ENCODE measurements at regions of chr19 and their contacts with region 1.

Region 1: GRCh38 chr19:46451352-46451751 is 20.0 kb downstream of the PNMA8A start:
- DNase-seq: no peak
- H3K4me3 ChIP-seq: no peak overlapping the region
- H3K27ac ChIP-seq: no peak overlapping the region
- H3K4me1 ChIP-seq: no peaks in the 10 kb centered on the region
- H3K27me3 ChIP-seq: no peaks in the 10 kb centered on the region
- CTCF ChIP-seq: no peak
- EP300 ChIP-seq: no peak
- POLR2A ChIP-seq: no peak
- RAD21 ChIP-seq: no peak

Region 2: DNA sequence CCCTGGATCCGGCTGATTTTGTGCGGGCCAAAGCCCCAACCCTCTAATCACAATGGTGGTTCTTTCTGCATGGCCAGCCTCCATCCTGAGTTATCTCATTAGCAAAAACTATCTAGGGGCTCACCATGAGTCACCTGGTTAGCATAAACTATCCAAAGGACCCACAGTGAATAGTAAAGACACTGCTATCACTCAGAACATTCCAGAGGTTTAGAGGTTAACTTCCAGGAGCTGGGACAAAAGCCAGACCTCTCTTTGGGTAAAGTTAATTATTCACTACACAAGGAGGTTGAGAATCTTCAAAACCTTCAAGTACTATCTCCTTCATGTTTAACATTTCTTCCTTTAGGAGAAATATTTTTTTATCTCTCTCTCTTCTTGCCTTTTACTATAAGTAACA is 123.3 kb before region 1 on chr19:
- CTCF ChIA-PET with region 1: no interaction called
- POLR2A ChIA-PET with region 1: no interaction called
- DNase-seq: no peak
- H3K4me3 ChIP-seq: no peak overlapping the region
- H3K27ac ChIP-seq: no peak overlapping the region
- H3K4me1 ChIP-seq: no peaks in the 10 kb centered on the region
- H3K27me3 ChIP-seq: no peaks in the 10 kb centered on the region
- CTCF ChIP-seq: no peak
- EP300 ChIP-seq: no peak
- POLR2A ChIP-seq: no peak
- RAD21 ChIP-seq: no peak

Region 3: DNA sequence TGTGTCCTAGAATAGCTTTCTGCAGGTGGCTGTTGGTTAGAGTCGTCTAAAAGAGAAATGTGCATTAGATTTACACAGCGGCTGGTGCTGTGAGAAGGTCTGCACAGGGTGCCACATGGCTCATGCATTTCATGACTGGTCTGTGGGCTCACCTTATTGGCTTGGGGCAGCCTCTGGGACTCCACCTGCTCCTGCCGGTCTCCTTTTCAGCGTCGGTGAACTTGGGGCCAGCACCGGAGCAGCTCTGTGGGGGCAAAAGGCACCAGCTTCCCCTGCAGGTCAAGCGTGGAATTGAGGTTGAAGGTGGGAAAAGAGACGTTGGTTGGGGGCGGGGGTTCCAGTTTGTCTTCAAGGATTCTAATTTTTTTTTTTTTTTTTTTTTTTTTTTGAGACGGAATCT is 19.5 kb before region 1 on chr19:
- CTCF ChIA-PET with region 1: interaction called, 20 read pairs
- POLR2A ChIA-PET with region 1: interaction called, 3 read pairs
- DNase-seq: peak in 1 of 2 experiments; percentile 76
- H3K4me3 ChIP-seq: no peak overlapping the region
- H3K27ac ChIP-seq: no peak overlapping the region
- H3K4me1 ChIP-seq: peaks cover 3 to 6% (median 5%) of the 10 kb centered on the region in 4 experiments; a peak in 6 of 7 replicates
- H3K27me3 ChIP-seq: peaks cover 0 to 13% (median 11%) of the 10 kb centered on the region in 4 experiments; a peak in 5 of 7 replicates
- CTCF ChIP-seq: peak; percentile 66 to 72 (median 68)
- EP300 ChIP-seq: no peak
- POLR2A ChIP-seq: no peak
- RAD21 ChIP-seq: peak; percentile 67 to 77

Region 4: DNA sequence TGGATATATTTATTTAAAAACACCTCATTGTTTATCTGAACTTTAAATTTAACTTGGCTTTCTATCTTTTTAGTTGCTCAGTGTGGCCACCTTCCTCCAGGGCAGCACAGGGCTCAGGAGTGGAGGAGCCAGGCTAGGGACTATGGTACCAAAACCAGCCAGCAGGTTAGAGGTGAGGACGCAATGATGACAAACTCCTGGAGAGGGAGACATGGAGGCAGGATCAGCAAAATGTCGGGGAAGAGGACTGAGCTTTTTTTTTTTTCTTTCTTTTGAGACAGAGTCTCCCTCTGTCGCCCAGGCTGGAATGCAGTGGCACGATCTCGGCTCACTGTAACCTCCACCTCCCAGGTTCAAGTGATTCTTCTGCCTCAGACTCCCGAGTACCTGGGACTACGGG is 120.2 kb after region 1 on chr19:
- CTCF ChIA-PET with region 1: no interaction called
- POLR2A ChIA-PET with region 1: no interaction called
- DNase-seq: peak; percentile 44 to 66
- H3K4me3 ChIP-seq: no peak overlapping the region
- H3K27ac ChIP-seq: no peak overlapping the region
- H3K4me1 ChIP-seq: no peaks in the 10 kb centered on the region; a peak in 2 of 7 replicates
- H3K27me3 ChIP-seq: no peaks in the 10 kb centered on the region; a peak in 1 of 7 replicates
- CTCF ChIP-seq: peak; percentile 57 to 95 (median 72)
- EP300 ChIP-seq: no peak
- POLR2A ChIP-seq: no peak
- RAD21 ChIP-seq: peak in 1 of 2 experiments; percentile 44; a peak in 3 of 4 replicates

Measured in H1 (cell line).